Activated CD4-positive, alpha-beta memory T cell treated with anti-CD3 and anti-CD28 coated beads for 36 hours (primary cell): ENCODE measurements at regions of chr2 and their contacts with region 1.

Region 1: DNA sequence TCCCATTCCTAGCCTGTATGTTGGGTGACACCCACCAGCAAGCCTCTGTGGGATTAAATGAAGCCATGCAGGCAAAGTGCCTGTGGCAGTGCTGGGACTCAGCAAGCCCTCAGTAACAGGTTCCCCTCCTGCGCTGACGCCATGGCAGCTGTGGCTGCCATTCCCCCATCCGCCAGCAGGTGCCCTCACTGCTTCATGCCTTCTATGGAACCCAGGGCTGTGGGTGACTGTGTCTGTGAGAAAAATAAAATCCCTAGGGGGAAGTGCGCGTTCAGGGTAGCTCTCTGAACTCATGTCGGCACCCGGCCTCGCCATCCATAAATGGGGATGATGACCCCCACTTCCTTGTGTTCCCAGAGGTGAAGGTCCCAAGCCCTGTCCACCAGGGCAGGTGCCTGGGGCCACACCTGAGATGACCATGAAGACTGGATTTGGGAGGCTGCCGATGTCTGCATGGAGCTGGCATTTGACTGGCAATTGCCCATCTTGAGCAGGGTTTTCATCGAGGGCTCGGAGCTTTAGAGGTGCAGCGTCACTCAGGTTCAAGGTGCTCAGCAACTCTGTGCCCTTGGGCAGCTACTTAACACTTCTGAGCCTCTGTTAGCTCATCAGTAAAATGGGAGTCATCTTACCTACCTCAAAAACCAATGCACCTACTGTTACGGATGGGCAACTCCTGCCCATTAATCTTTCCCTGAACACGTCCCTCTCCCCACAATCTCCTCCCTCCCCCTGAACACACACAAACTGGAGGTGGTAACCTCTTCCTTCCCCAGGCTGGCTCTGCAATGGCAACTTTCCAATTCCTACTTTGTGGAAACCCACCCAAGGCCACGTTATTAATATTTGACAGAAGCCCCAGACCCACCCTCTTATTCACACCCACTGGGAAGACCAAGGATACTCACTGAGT is 2.9 kb upstream of the MAL start:
- DNase-seq: peak; percentile 93
- H3K4me3 Mint-ChIP-seq: no peak overlapping the region
- H3K27ac Mint-ChIP-seq: peak overlapping the region; percentile 55
- H3K4me1 Mint-ChIP-seq: peaks cover 44% of the 10 kb centered on the region
- H3K27me3 Mint-ChIP-seq: no peaks in the 10 kb centered on the region

Region 2: DNA sequence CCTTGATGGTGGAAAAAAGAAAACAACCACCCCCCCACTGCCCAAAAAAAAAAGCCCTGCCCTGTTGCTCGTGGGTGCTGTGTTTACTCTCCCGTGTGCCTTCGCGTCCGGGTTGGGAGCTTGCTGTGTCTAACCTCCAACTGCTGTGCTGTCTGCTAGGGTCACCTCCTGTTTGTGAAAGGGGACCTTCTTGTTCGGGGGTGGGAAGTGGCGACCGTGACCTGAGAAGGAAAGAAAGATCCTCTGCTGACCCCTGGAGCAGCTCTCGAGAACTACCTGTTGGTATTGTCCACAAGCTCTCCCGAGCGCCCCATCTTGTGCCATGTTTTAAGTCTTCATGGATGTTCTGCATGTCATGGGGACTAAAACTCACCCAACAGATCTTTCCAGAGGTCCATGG is 31.0 kb after region 1 on chr2:
- CTCF ChIA-PET with region 1: interaction called, 89 read pairs
- POLR2A ChIA-PET with region 1: interaction called, 4 read pairs
- intact Hi-C with region 1: loop called (anchors 1 kb)
- DNase-seq: no peak
- H3K4me3 Mint-ChIP-seq: no peak overlapping the region
- H3K27ac Mint-ChIP-seq: no peak overlapping the region
- H3K4me1 Mint-ChIP-seq: peaks cover 56% of the 10 kb centered on the region
- H3K27me3 Mint-ChIP-seq: no peaks in the 10 kb centered on the region

Region 3: DNA sequence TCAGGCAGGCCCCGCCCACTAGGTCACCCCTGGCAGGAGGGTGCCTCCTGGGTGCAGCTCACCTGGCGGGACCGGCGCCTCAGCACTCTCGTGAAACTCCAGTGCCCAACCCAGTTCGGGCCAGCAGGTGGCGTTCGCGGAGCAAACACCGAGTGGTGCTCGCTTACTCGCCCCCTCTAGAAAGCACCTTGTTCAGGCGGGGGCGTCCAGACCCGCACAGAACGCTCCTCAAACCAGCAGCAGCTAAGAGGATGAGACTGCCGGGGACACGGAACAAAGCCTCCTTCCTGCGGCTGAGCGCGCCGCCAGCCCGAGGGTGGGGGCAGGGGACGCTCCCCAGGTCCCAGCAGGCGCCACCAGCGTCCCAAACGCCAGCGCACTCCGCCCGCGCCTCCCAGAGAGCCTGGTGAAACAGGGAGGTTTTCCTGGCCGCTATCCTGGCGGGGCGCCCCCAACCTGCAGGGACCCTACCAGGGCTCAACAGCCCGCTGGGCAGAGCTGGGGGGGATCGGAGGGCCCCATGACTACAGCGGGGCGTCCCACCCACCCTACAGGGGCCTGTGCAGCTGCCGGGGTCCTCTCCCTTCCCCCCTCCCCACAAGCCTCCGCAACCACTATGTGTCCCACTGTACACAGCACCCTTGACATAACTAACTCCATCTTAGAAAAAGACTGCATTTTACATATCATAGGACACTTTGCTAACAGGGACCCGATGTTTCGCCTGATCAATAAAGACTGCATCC is 54.4 kb after region 1 on chr2:
- CTCF ChIA-PET with region 1: interaction called, 409 read pairs
- POLR2A ChIA-PET with region 1: interaction called, 17 read pairs
- intact Hi-C with region 1: loop called (anchors 1 kb)
- DNase-seq: peak; percentile 95
- H3K4me3 Mint-ChIP-seq: peak overlapping the region; percentile 72
- H3K27ac Mint-ChIP-seq: peak overlapping the region; percentile 92
- H3K4me1 Mint-ChIP-seq: peaks cover 62% of the 10 kb centered on the region
- H3K27me3 Mint-ChIP-seq: peaks cover 1% of the 10 kb centered on the region

Region 4: DNA sequence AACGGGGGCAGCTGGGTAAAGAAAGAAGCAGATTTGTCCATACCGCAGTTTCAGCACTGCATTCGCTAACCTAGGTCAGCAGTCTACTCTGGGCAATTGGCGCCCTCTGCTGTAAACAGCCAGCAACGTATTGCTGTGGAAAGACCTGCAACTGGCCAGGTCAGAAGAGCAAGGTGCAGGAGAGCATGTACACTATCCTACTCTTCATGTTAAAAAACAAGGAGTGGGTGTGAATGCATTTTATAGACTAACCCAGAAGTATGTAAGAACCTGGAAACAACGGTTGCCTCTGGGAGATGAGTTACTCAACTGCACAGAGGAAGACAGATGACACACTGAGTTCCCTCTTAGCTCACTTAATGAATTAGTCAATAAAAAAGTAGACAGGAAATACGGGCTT is 92.9 kb after region 1 on chr2:
- CTCF ChIA-PET with region 1: interaction called, 143 read pairs
- POLR2A ChIA-PET with region 1: interaction called, 8 read pairs
- intact Hi-C with region 1: loop called (anchors 1 kb)
- DNase-seq: peak; percentile 83
- H3K4me3 Mint-ChIP-seq: no peak overlapping the region
- H3K27ac Mint-ChIP-seq: peak overlapping the region; percentile 38
- H3K4me1 Mint-ChIP-seq: peaks cover 41% of the 10 kb centered on the region
- H3K27me3 Mint-ChIP-seq: no peaks in the 10 kb centered on the region

Region 5: GRCh38 chr2:95165129-95166064 is 142.8 kb after region 1 on chr2 and contains the start of gene ZNF2:
- CTCF ChIA-PET with region 1: interaction called, 8 read pairs
- POLR2A ChIA-PET with region 1: interaction called, 6 read pairs
- intact Hi-C with region 1: loop called (anchors 5 kb)
- DNase-seq: peak; percentile 98
- H3K4me3 Mint-ChIP-seq: peak within 1 kb of the TSS; percentile 100
- H3K27ac Mint-ChIP-seq: peak within 1 kb of the TSS; percentile 93
- H3K4me1 Mint-ChIP-seq: peaks cover 34% of the 10 kb centered on the region
- H3K27me3 Mint-ChIP-seq: no peaks in the 10 kb centered on the region
- total RNA-seq, gene ZNF2: 3.9 to 4.4 TPM

Region 6: DNA sequence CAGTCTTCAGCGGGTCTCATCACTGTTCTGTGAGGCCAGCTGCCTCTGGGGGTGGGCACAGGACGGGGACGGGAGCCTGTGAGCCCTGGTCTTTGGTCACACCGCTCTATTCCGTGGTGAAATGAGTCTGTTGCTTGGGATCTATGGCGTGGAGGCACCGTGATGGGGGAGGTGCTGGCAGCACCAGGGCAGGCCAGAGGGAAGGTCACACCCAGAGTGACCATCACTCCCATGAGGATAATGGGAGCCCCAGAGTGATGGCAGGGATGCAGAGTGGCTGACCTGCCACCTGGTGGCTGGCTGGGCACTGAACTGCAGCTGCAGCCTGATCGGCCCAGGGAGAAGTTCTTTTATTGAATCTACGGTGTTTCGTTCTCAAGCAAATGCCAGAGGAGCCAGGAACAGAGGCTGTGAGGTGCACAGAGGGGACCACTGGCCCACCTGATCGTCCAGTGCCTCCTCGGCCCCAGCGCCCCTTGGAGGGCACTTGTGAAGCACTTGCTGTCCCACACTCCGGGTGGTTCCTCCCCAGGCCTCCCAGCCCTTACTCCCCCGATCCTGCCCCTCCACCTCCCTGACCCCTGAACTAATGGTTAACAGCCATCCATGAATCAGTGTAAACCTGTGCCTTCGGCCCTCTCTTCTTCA is 292.5 kb after region 1 on chr2:
- CTCF ChIA-PET with region 1: no interaction called
- POLR2A ChIA-PET with region 1: no interaction called
- intact Hi-C with region 1: loop called (anchors 10 kb)
- DNase-seq: no peak
- H3K4me3 Mint-ChIP-seq: no peak overlapping the region
- H3K27ac Mint-ChIP-seq: no peak overlapping the region
- H3K4me1 Mint-ChIP-seq: no peaks in the 10 kb centered on the region
- H3K27me3 Mint-ChIP-seq: peaks cover 3% of the 10 kb centered on the region